H1 (cell line): ENCODE measurements at regions of chr19 and their contacts with region 1.

Region 1: GRCh38 chr19:50537762-50538230 is 24.1 kb upstream of the ASPDH start:
- DNase-seq: peak; percentile 89 to 99
- H3K4me3 ChIP-seq: no peak overlapping the region
- H3K27ac ChIP-seq: no peak overlapping the region
- H3K4me1 ChIP-seq: no peaks in the 10 kb centered on the region
- H3K27me3 ChIP-seq: no peaks in the 10 kb centered on the region
- CTCF ChIP-seq: peak; percentile 98 to 100 (median 99)
- EP300 ChIP-seq: peak in 1 of 2 experiments; percentile 16; a peak in 1 of 3 replicates
- POLR2A ChIP-seq: no peak
- RAD21 ChIP-seq: peak; percentile 89 to 91

Region 2: GRCh38 chr19:50461066-50461875 is 76.5 kb before region 1 on chr19:
- CTCF ChIA-PET with region 1: interaction called, 10 read pairs
- POLR2A ChIA-PET with region 1: no interaction called
- DNase-seq: peak in 1 of 2 experiments; percentile 84
- H3K4me3 ChIP-seq: no peak overlapping the region
- H3K27ac ChIP-seq: no peak overlapping the region
- H3K4me1 ChIP-seq: peaks cover 0 to 10% (median 2%) of the 10 kb centered on the region in 4 experiments; a peak in 5 of 7 replicates
- H3K27me3 ChIP-seq: no peaks in the 10 kb centered on the region
- CTCF ChIP-seq: peak; percentile 81 to 92 (median 84)
- EP300 ChIP-seq: no peak
- POLR2A ChIP-seq: no peak
- RAD21 ChIP-seq: peak; percentile 84 to 86

Region 3: DNA sequence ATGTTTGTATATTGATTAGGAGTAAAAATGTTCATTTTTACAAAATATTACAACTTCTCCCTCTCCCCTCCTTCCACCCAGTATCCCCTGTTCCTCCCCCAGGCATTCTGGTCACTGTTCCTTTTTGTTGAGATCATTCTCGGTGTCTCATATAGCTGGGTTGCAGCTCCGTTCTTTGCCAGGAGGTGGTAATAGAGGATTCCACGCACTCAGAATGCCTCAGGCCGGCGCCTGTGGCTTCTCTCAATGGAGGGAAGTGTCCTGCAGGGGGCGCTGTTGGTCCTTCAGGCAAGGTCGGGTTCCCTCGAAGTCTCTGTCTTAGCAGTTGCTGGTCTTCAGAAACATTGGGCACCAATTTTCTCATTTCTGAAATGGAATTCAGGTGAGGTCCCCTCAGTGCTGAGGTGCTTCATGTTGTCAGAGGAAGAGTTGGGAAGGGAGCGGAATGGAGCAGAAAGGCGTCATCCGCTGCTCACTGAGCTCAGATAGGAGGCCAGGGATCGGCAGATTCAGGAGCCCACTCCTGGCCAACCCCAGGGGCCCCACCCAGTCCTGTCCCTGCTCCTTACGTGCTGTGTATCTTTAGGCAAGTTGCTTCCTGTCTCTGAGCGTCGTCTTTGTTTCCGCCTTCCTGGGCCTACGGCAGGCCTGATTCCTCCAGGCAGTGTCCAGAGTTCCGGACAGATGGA is 50.8 kb before region 1 on chr19:
- CTCF ChIA-PET with region 1: interaction called, 26 read pairs
- POLR2A ChIA-PET with region 1: interaction called, 4 read pairs
- DNase-seq: peak; percentile 88 to 97
- H3K4me3 ChIP-seq: no peak overlapping the region
- H3K27ac ChIP-seq: no peak overlapping the region
- H3K4me1 ChIP-seq: peaks cover 0 to 15% (median 6%) of the 10 kb centered on the region in 4 experiments; a peak in 4 of 7 replicates
- H3K27me3 ChIP-seq: peaks cover 5 to 50% (median 34%) of the 10 kb centered on the region in 4 experiments
- CTCF ChIP-seq: peak; percentile 84 to 98 (median 94)
- EP300 ChIP-seq: no peak
- POLR2A ChIP-seq: no peak
- RAD21 ChIP-seq: peak; percentile 82 to 85

Region 4: DNA sequence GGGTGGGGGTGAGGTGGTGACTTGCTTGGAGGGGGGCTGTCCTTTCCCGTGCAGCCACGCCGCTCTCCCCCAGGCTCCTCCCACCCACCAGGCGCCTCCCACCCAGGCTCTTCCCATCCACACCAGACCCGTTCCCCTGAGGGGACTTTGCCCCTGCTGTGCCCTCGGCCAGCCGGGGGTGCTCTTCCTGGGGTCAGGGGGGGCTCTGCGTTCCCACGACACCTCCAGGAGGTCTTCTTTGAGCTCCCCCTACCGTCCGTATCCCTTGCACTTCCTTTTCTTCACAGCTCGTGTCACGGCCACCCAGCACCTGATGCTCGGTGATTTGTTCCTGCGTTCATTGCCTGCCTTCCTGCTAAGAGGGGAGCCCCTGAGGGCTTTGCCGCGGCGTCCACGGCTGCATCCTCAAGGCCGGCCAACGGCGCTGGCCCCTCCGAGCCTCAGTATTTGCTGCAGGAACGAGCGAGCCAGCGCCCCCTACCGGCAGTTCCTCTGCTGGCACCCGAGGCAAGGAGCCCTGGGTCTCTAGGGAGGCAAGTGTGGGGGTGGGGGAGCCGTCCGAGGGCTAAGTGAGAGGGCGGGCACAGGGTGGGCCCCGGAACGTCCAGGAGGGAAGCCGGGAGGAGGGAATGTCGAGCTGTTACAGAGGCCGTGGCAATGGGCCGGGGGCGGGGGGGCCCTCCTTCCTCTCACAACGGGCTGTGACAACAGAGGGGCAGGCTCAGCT is 18.6 kb after region 1 on chr19:
- CTCF ChIA-PET with region 1: interaction called, 269 read pairs
- POLR2A ChIA-PET with region 1: interaction called, 15 read pairs
- DNase-seq: peak; percentile 70 to 99
- H3K4me3 ChIP-seq: peak overlapping the region; percentile 45 to 72 (median 62)
- H3K27ac ChIP-seq: no peak overlapping the region
- H3K4me1 ChIP-seq: peaks cover 0 to 19% (median 5%) of the 10 kb centered on the region in 4 experiments; a peak in 5 of 7 replicates
- H3K27me3 ChIP-seq: peaks cover 0 to 30% (median 19%) of the 10 kb centered on the region in 4 experiments; a peak in 6 of 7 replicates
- CTCF ChIP-seq: peak; percentile 90 to 93 (median 90)
- EP300 ChIP-seq: no peak
- POLR2A ChIP-seq: no peak
- RAD21 ChIP-seq: peak; percentile 43 to 65

Region 5: DNA sequence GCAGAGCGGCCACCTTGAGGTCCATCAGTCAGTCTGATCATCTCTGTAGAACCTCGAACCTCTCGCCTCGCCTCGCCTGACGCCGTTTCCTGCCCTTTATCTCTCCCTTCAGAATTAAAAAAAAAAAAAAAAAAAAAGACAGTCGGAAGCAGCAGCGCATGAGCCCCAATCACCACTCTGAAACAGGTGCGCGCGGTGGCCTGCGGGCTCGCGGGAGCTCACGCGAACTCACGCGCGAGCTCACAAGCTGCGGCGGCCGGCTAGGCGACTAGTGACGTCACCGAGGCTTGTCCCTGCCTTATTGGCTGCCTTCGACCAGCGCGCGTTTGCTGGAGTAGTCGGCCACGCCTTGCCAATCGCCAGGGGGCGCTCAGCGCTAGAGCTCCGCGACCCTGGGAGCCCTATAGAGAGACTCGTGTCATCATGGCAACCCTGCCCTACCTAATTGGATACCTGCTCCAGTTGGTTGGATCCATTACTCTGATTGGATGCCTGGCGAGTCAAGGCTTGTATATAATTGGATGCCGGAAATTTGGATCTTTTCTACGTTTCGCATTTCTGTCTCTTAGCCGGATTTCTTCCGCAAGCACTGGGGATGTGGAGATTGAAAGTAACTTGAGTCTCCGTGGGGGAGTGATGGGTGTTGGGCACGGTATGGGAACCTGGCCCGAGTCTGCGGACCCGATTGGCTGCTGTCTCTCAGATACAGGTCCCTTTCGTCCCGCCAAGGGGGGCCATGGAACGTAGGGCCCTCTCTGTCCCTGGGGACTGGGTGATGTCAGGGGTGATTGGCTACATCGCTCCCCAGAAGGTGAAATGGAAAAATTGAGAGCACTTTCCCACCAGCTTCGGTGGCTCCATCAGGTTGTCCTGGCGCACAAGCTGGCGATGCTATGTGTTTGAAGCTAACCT is 70.3 kb after region 1 on chr19:
- CTCF ChIA-PET with region 1: interaction called, 14 read pairs
- POLR2A ChIA-PET with region 1: interaction called, 4 read pairs
- DNase-seq: peak; percentile 97 to 99
- H3K4me3 ChIP-seq: peak overlapping the region; percentile 16 to 54 (median 30); a peak in 7 of 8 replicates
- H3K27ac ChIP-seq: no peak overlapping the region
- H3K4me1 ChIP-seq: peaks cover 0 to 4% (median 3%) of the 10 kb centered on the region in 4 experiments; a peak in 5 of 7 replicates
- H3K27me3 ChIP-seq: peaks cover 3 to 17% (median 13%) of the 10 kb centered on the region in 4 experiments
- CTCF ChIP-seq: peak; percentile 68 to 93 (median 81)
- EP300 ChIP-seq: no peak
- POLR2A ChIP-seq: no peak
- RAD21 ChIP-seq: peak; percentile 79 to 81

Region 6: GRCh38 chr19:50705422-50706019 is 167.7 kb after region 1 on chr19:
- CTCF ChIA-PET with region 1: interaction called, 27 read pairs
- POLR2A ChIA-PET with region 1: no interaction called
- DNase-seq: peak in 1 of 2 experiments; percentile 67
- H3K4me3 ChIP-seq: no peak overlapping the region
- H3K27ac ChIP-seq: no peak overlapping the region
- H3K4me1 ChIP-seq: peaks cover 0 to 3% (median under 1%) of the 10 kb centered on the region in 4 experiments; a peak in 5 of 7 replicates
- H3K27me3 ChIP-seq: peaks cover 0 to 10% (median 5%) of the 10 kb centered on the region in 4 experiments; a peak in 4 of 7 replicates
- CTCF ChIP-seq: peak; percentile 73 to 85 (median 80)
- EP300 ChIP-seq: no peak
- POLR2A ChIP-seq: no peak
- RAD21 ChIP-seq: peak; percentile 83 to 88

Region 7: GRCh38 chr19:50777754-50778303 is 240.0 kb after region 1 on chr19:
- CTCF ChIA-PET with region 1: interaction called, 21 read pairs
- POLR2A ChIA-PET with region 1: interaction called, 3 read pairs
- DNase-seq: no peak
- H3K4me3 ChIP-seq: peak overlapping the region in 1 of 4 experiments; percentile 47; a peak in 3 of 8 replicates
- H3K27ac ChIP-seq: no peak overlapping the region
- H3K4me1 ChIP-seq: peaks cover 2 to 7% (median 4%) of the 10 kb centered on the region in 4 experiments; a peak in 5 of 7 replicates
- H3K27me3 ChIP-seq: peaks cover 3 to 53% (median 35%) of the 10 kb centered on the region in 4 experiments
- CTCF ChIP-seq: no peak
- EP300 ChIP-seq: no peak
- POLR2A ChIP-seq: no peak
- RAD21 ChIP-seq: no peak